ENCODE measurements at regions of chr12 and their contacts with region 1.

Region 1: DNA sequence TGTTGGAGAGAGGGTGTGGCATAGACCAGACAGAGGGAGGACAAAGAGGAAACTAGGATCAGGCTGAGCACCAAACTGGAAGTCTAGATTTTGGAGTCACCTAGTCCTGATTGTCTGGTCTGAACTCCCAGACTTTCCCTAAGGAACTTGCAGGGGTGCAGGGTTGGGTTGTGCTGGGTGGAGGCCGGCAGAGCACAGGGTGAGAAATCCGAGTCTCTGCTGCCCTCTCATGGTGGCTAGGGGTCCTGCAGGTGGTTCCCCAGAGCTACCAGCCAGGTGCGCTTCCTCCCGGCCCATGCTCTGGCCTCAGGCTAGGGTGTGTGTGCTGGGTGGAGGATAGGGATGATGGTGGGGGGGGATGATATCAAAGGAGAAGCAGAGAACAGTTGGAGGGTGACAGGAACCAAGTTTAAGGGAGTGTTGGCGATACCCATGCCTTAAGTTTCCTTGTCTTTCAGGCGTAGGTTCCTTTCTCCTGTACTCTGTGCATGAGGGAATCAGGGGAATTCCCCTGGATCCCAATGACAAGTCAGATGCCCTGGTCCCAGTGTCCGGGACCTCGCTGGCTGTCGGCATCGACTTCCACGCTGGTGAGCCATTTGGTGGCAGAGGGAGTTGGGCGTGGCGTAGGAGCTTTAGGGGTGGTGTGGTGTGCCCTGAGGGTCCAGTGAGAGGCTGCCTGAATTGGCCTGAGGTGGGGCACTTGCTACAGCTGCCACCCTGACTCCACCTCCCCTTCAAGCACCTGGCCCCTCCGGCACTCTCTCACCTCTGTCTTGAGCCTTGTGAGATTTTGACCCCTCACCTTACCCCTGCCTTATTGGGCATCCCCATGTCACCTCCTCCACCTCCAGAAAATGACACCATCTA is 33.4 kb upstream of the NXPH4 start:
- DNase-seq: peak; percentile 80
- H3K4me3 ChIP-seq: no peak overlapping the region
- H3K27ac ChIP-seq: no peak overlapping the region
- H3K4me1 ChIP-seq: peaks cover 3% of the 10 kb centered on the region
- CTCF ChIP-seq: peak; percentile 93

Region 2: GRCh38 chr12:57005980-57006808 is 177.0 kb before region 1 on chr12 and contains the start of gene ZBTB39:
- CTCF ChIA-PET with region 1: no interaction called
- POLR2A ChIA-PET with region 1: no interaction called
- intact Hi-C with region 1: loop called (anchors 5 kb)
- DNase-seq: peak; percentile 84
- H3K4me3 ChIP-seq: peak within 1 kb of the TSS; percentile 92
- H3K27ac ChIP-seq: peak within 1 kb of the TSS; percentile 44
- H3K4me1 ChIP-seq: peaks cover 15% of the 10 kb centered on the region
- CTCF ChIP-seq: peak; percentile 76
- total RNA-seq, gene ZBTB39: 10.9 TPM in 2 replicates

Region 3: GRCh38 chr12:57124259-57124877 is 58.8 kb before region 1 on chr12:
- CTCF ChIA-PET with region 1: interaction called, 8 read pairs
- POLR2A ChIA-PET with region 1: interaction called, 3 read pairs
- intact Hi-C with region 1: loop called (anchors 1 kb)
- DNase-seq: peak; percentile 78
- H3K4me3 ChIP-seq: no peak overlapping the region
- H3K27ac ChIP-seq: no peak overlapping the region
- H3K4me1 ChIP-seq: peaks cover 5% of the 10 kb centered on the region
- CTCF ChIP-seq: peak; percentile 98